Activated CD4-positive, alpha-beta memory T cell treated with anti-CD3 and anti-CD28 coated beads for 36 hours (primary cell): ENCODE measurements at regions of chr12 and their contacts with region 1.

Region 1: DNA sequence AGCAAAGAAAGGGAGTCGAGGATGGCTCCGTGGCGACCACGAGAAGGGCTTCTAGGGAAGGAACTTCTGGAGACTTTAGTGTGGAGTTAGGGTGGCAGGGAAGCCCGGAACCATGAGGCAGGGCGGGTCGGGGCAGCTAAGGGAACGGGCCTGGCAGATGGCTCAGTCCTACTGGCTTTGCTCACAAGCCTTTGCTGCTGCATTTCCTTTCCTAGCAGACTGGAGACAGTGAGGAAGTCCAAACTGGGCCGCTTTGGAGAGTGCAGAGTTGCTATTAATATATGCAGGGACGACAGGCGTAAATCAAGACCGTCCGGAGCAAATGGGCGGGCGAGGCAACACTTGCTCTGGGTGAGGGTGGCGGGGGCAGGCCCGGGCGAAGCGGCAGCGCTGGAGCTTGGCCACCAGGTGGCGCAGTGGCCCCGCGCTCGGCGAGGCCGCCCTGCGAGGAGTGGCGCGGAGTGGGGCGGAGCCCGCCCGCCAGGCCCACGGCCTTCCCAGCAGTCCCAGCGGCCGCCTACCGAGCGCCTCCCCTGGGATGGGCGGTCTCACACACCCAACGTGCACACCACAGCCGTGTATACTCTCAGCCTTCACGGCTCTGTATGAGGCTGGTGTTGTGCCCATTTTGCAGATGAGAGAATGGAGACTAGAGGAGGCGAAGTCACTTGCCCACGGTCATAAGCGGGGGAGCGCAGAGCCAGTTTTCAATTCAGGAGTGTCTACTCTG is 24.4 kb upstream of the LRTM2 start:
- DNase-seq: peak; percentile 96
- H3K4me3 Mint-ChIP-seq: peak overlapping the region; percentile 82
- H3K27ac Mint-ChIP-seq: peak overlapping the region; percentile 92
- H3K4me1 Mint-ChIP-seq: peaks cover 15% of the 10 kb centered on the region
- H3K27me3 Mint-ChIP-seq: no peaks in the 10 kb centered on the region

Region 2: DNA sequence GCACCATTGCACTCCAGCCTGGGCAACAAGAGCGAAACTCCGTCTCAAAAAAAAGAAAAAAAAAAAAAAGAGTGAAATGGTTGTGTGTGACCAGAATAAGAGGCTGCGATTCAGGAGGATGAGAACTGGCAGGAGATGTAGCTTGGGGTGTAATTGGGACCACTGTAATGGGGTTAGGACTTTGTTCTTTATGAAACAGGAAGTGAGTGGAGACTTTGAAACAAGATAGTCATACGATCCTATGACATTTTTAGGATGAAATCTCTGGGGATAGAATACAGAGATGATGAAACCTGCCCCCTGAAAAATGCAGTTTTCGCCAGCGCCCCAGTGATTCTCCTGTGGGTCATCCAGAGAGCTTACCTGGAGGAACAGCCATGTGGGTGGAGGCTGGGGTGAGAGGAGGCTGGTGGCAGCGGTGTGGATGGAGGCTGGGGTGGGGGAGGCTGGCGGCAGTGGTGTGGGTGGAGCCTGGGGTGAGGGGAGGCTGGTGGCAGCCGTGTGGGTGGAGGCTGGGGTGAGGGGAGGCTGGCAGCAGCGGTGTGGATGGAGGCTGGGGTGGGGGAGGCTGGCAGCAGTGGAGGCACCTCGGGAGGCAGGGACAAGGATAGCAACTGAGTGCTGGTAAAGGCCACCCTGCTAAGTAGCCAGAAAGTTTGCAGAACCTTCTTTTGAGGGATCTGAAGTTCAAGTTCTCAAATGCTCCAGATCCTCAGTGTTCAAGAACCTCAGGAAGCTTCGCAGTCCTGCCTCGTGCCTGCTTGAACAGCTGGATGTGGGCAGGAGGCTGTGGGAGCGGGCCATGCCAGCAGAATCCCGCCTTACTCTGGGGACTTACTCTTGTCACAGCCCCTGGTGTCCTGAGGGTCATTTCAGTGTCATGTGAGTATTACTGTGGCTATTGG is 221.7 kb before region 1 on chr12:
- CTCF ChIA-PET with region 1: no interaction called
- POLR2A ChIA-PET with region 1: no interaction called
- intact Hi-C with region 1: no loop called
- DNase-seq: no peak
- H3K4me3 Mint-ChIP-seq: no peak overlapping the region
- H3K27ac Mint-ChIP-seq: no peak overlapping the region
- H3K4me1 Mint-ChIP-seq: no peaks in the 10 kb centered on the region
- H3K27me3 Mint-ChIP-seq: no peaks in the 10 kb centered on the region

Region 3: GRCh38 chr12:1650260-1650977 is 145.5 kb before region 1 on chr12:
- CTCF ChIA-PET with region 1: interaction called, 498 read pairs
- POLR2A ChIA-PET with region 1: interaction called, 9 read pairs
- intact Hi-C with region 1: loop called (anchors 1 kb)
- DNase-seq: no peak
- H3K4me3 Mint-ChIP-seq: no peak overlapping the region
- H3K27ac Mint-ChIP-seq: no peak overlapping the region
- H3K4me1 Mint-ChIP-seq: no peaks in the 10 kb centered on the region
- H3K27me3 Mint-ChIP-seq: peaks cover 10% of the 10 kb centered on the region

Region 4: DNA sequence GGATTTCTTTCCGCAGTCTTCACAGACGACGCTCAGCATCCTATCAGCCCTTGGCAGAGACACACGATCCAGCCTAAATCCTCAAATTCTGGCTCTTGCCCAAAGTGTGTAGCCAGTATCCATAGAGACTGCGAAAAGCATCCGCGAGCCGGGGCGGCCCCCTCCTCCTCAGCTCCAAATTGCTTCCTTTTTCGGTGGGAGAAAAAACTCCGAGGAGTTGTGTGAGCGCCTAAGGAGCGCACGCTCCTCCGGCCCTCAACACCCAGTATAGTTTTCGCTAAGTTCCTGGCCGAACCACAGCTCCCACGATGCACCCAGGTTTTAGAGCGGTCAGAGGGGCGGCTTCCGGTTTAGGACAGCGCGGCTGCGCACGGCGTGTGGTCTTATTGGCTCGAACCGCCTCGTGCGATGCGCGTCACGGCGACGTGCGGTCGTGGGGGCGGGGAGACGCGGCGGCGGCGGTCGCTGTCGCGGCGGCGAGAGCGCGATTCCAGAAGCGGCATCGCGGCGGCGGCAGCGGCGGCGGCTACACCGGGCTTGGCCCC is 105.3 kb before region 1 on chr12 and contains the start of gene ADIPOR2:
- CTCF ChIA-PET with region 1: interaction called, 11 read pairs
- POLR2A ChIA-PET with region 1: no interaction called
- intact Hi-C with region 1: no loop called
- DNase-seq: peak; percentile 96
- H3K4me3 Mint-ChIP-seq: peak within 1 kb of the TSS; percentile 93
- H3K27ac Mint-ChIP-seq: peak within 1 kb of the TSS; percentile 99
- H3K4me1 Mint-ChIP-seq: peaks cover 39% of the 10 kb centered on the region
- H3K27me3 Mint-ChIP-seq: no peaks in the 10 kb centered on the region
- total RNA-seq, gene ADIPOR2: 43.8 to 47.3 TPM

Region 5: GRCh38 chr12:1812650-1813302 is 16.8 kb after region 1 on chr12:
- CTCF ChIA-PET with region 1: no interaction called
- POLR2A ChIA-PET with region 1: no interaction called
- intact Hi-C with region 1: loop called (anchors 2 kb)
- DNase-seq: no peak
- H3K4me3 Mint-ChIP-seq: no peak overlapping the region
- H3K27ac Mint-ChIP-seq: no peak overlapping the region
- H3K4me1 Mint-ChIP-seq: peaks cover 7% of the 10 kb centered on the region
- H3K27me3 Mint-ChIP-seq: peaks cover 2% of the 10 kb centered on the region

Region 6: DNA sequence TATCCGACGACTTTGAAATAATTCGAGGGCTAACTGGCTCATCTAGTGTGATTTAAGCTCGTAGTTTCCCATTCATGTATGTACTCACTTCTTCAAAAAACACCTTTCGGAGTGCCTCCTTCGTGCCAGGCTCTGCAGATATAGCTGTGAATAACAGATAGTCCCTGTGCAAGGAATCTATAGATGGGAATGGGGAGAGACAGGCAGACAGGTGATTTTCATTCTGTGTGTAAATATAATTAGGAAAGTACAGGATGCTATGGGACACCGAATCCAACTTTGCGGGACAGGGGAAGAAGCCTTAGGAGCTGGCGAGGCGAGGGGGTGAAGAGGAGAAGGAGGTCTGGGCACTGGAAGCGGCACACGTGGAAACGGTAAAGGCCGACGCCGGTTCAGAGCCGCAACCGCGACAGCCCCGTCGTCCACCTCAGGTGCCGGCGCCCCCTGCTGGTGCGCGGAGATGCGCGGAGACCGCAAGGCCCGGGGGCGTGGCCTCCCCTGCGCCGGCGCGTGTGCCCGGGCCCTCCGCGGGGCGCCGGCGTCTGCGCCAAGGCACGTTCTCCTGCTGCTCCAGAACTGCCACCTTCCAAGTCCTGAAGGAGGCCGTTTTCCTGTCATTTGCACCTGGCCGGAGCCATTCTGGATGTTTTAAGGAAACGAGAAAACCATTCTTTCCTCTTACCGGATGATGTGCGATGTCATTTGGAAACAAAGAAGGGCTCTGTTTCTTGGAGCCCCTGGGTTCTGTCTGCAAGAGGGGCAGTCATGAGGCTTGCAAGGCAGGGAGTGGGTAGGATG is 238.9 kb after region 1 on chr12:
- CTCF ChIA-PET with region 1: no interaction called
- POLR2A ChIA-PET with region 1: no interaction called
- intact Hi-C with region 1: loop called (anchors 2 kb)
- DNase-seq: peak; percentile 89
- H3K4me3 Mint-ChIP-seq: peak overlapping the region; percentile 62
- H3K27ac Mint-ChIP-seq: no peak overlapping the region
- H3K4me1 Mint-ChIP-seq: peaks cover 10% of the 10 kb centered on the region
- H3K27me3 Mint-ChIP-seq: peaks cover 26% of the 10 kb centered on the region

Region 7: GRCh38 chr12:2583091-2583497 is 787.1 kb after region 1 on chr12:
- CTCF ChIA-PET with region 1: interaction called, 5 read pairs
- POLR2A ChIA-PET with region 1: no interaction called
- intact Hi-C with region 1: loop called (anchors 5 kb)
- DNase-seq: peak; percentile 69
- H3K4me3 Mint-ChIP-seq: no peak overlapping the region
- H3K27ac Mint-ChIP-seq: no peak overlapping the region
- H3K4me1 Mint-ChIP-seq: peaks cover 3% of the 10 kb centered on the region
- H3K27me3 Mint-ChIP-seq: peaks cover 30% of the 10 kb centered on the region